IMR-90 (cell line): ENCODE measurements at regions of chr11 and their contacts with region 1.

Region 1: DNA sequence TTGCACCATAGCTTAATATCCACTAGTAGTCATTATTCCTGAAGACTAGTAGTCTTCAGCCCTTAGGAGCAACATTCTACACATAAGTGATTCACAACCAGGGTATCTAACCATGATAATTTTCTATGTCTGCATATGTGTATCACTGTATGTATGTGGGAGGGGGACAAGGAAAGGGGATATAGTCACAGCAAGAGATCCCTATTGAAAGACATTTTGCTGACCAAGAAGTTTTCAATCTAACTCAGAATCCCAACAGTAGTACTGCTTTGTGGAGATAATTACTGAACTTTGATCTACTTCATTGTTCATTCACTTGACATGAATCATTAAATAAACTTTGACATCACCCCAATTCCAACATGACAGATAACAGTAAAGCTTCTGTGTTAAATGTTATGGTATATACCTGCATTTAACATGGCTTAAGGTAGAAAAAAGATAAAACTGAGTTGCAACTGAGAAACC is 10.3 kb downstream of the PIK3C2A start:
- DNase-seq: peak; percentile 43
- ATAC-seq: peak; percentile 46
- H3K4me3 ChIP-seq: no peak overlapping the region
- H3K27ac ChIP-seq: no peak overlapping the region
- H3K4me1 ChIP-seq: no peaks in the 10 kb centered on the region
- H3K27me3 ChIP-seq: no peaks in the 10 kb centered on the region
- CTCF ChIP-seq: no peak
- POLR2A ChIP-seq: no peak
- RAD21 ChIP-seq: no peak

Region 2: GRCh38 chr11:15840966-15841365 is 1356.5 kb before region 1 on chr11:
- CTCF ChIA-PET with region 1: no interaction called
- POLR2A ChIA-PET with region 1: interaction called, 14 read pairs
- dilution Hi-C with region 1: no loop called
- in situ Hi-C with region 1: no loop called
- intact Hi-C with region 1: no loop called
- DNase-seq: no peak
- ATAC-seq: no peak
- H3K4me3 ChIP-seq: no peak overlapping the region
- H3K27ac ChIP-seq: no peak overlapping the region
- H3K4me1 ChIP-seq: no peaks in the 10 kb centered on the region; the same call in 1 of the 2 replicates
- H3K27me3 ChIP-seq: no peaks in the 10 kb centered on the region
- CTCF ChIP-seq: no peak
- POLR2A ChIP-seq: no peak
- RAD21 ChIP-seq: no peak

Region 3: GRCh38 chr11:17116121-17116520 is 81.3 kb before region 1 on chr11:
- CTCF ChIA-PET with region 1: no interaction called
- POLR2A ChIA-PET with region 1: no interaction called
- dilution Hi-C with region 1: no loop called
- in situ Hi-C with region 1: no loop called
- intact Hi-C with region 1: no loop called
- DNase-seq: no peak
- ATAC-seq: no peak
- H3K4me3 ChIP-seq: no peak overlapping the region
- H3K27ac ChIP-seq: no peak overlapping the region
- H3K4me1 ChIP-seq: no peaks in the 10 kb centered on the region
- H3K27me3 ChIP-seq: no peaks in the 10 kb centered on the region
- CTCF ChIP-seq: no peak
- POLR2A ChIP-seq: no peak
- RAD21 ChIP-seq: no peak

Region 4: GRCh38 chr11:17171916-17172315 is 25.5 kb before region 1 on chr11:
- CTCF ChIA-PET with region 1: no interaction called
- POLR2A ChIA-PET with region 1: no interaction called
- dilution Hi-C with region 1: no loop called
- in situ Hi-C with region 1: no loop called
- intact Hi-C with region 1: no loop called
- DNase-seq: peak; percentile 11
- ATAC-seq: peak; percentile 41
- H3K4me3 ChIP-seq: no peak overlapping the region
- H3K27ac ChIP-seq: peak overlapping the region; percentile 87; the same call in 1 of the 2 replicates
- H3K4me1 ChIP-seq: peaks cover 4% of the 10 kb centered on the region; the same call in 1 of the 2 replicates
- H3K27me3 ChIP-seq: no peaks in the 10 kb centered on the region
- CTCF ChIP-seq: no peak
- POLR2A ChIP-seq: no peak
- RAD21 ChIP-seq: no peak

Region 5: DNA sequence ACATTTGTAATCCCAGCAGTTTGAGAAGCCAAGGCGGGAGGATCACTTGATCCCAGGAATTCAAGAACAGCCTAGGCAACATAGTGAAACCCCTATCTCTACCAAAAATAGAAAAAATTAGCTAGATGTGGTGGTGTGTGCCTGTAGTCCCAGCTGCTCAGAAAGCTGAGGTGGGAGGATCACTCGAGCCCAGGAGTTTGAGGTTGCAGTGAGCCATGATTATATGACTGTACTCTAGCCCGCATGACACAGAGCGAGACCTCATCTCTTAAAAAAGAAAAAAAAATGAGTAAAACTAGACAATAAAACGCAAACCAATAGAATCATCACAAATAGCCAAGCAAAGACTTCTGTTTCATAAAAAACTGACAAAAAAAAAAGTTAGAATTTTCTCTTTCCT is 100.8 kb after region 1 on chr11:
- CTCF ChIA-PET with region 1: no interaction called
- POLR2A ChIA-PET with region 1: no interaction called
- dilution Hi-C with region 1: no loop called
- in situ Hi-C with region 1: no loop called
- intact Hi-C with region 1: no loop called
- DNase-seq: peak; percentile 39
- ATAC-seq: no peak
- H3K4me3 ChIP-seq: no peak overlapping the region
- H3K27ac ChIP-seq: no peak overlapping the region
- H3K4me1 ChIP-seq: peaks cover 3% of the 10 kb centered on the region
- H3K27me3 ChIP-seq: no peaks in the 10 kb centered on the region
- CTCF ChIP-seq: no peak
- POLR2A ChIP-seq: no peak
- RAD21 ChIP-seq: no peak

Region 6: DNA sequence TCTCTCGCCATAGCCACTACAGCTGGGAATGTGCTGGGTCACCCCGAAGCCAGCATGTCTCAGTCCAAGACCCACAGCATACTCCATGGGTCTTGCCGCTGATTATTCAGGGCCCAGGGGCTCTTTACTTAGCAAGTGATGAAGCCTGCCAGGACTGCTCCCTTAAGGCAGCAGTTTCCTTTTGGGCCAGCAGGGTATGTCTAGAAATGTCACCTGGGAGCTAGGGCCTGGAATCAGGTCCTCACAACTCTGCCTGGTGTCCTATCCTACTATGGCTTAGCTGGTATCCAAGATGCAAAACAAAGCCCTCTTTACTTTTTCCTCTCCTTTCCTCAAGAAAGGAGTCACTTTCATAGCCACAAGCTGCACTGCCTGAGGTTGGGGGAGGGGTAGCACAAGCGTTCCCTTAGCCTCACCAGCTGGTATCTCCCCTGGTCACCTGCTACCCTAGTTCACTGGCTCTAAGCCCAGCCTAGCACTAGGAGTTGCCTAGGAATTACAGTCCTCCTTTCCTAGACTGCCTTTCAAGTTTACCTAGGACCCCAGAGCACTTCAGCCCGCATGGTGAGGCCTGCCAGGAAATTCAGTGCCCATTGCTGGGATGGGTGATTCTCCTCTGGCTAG is 131.5 kb after region 1 on chr11:
- CTCF ChIA-PET with region 1: no interaction called
- POLR2A ChIA-PET with region 1: no interaction called
- dilution Hi-C with region 1: no loop called
- in situ Hi-C with region 1: no loop called
- intact Hi-C with region 1: no loop called
- DNase-seq: no peak
- ATAC-seq: no peak
- H3K4me3 ChIP-seq: no peak overlapping the region
- H3K27ac ChIP-seq: no peak overlapping the region
- H3K4me1 ChIP-seq: no peaks in the 10 kb centered on the region
- H3K27me3 ChIP-seq: no peaks in the 10 kb centered on the region
- CTCF ChIP-seq: no peak
- POLR2A ChIP-seq: no peak
- RAD21 ChIP-seq: no peak